ENCODE measurements at regions of chr5 and their contacts with region 1.

Region 1: DNA sequence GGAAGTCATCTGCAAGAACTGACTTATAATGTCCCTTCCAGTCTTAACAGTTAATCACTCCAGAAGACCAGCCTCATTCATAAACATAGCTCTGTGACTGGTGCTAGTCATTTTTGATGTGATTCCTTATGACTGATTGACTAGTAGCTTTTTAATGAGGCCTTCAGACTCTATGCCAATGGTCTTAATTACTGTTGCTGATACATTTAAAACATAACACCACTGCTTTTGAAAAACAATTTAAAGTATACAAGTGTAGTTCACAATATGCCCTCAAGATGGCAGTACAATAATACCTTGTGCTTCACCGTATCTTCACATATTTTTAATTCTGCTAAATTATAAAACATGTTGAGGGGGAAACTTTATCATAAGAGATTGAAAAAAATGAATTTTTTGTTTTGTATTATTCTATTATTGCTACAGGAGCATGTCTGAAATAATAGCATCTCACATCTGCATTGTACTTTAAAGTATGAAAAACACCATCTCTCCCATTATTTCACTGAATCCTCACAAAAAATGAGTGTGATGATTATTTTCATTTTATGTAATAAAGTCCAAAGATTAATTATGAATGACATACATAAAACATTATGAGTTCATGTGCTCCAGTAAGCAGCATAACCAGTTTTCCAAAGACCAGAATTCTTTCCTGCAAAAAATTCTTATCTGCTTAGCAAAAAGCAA is 55.2 kb upstream of the SHISAL2B start:
- DNase-seq: peak in 2 of 9 experiments; percentile 42 to 57
- ATAC-seq: no peak
- H3K4me3 ChIP-seq: no peak overlapping the region
- H3K4me3 Mint-ChIP-seq: no peak overlapping the region
- H3K27ac ChIP-seq: no peak overlapping the region
- H3K27ac Mint-ChIP-seq: no peak overlapping the region
- H3K4me1 ChIP-seq: no peaks in the 10 kb centered on the region
- H3K4me1 Mint-ChIP-seq: no peaks in the 10 kb centered on the region
- H3K27me3 ChIP-seq: no peaks in the 10 kb centered on the region
- H3K27me3 Mint-ChIP-seq: peaks cover 29% of the 10 kb centered on the region
- CTCF ChIP-seq: peak; percentile 97

Region 2: DNA sequence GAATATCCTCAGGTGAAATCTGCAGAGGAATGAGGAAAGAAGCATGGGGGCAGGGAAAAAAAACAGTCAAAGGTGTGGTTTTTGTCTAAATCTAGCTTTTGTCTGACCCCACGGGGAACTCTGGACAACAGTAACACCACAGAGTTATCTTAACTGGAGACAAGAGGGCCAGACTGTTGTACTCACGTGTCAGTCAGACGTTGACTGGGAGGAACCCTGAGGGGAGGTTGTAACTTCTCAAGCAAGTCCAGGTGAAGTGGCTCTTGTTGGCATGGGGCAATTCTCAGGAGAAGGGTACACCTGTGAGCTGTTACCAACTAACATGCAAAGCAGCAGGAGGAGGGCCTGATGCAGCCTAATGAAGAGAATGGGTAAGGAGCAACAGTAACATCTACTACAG is 11.0 kb after region 1 on chr5:
- CTCF ChIA-PET with region 1: interaction called, 34 read pairs
- POLR2A ChIA-PET with region 1: no interaction called
- intact Hi-C with region 1: no loop called
- DNase-seq: no peak
- ATAC-seq: no peak
- H3K4me3 ChIP-seq: no peak overlapping the region
- H3K4me3 Mint-ChIP-seq: no peak overlapping the region
- H3K27ac ChIP-seq: no peak overlapping the region
- H3K27ac Mint-ChIP-seq: no peak overlapping the region
- H3K4me1 ChIP-seq: no peaks in the 10 kb centered on the region
- H3K4me1 Mint-ChIP-seq: no peaks in the 10 kb centered on the region
- H3K27me3 ChIP-seq: no peaks in the 10 kb centered on the region
- H3K27me3 Mint-ChIP-seq: peaks cover 5% of the 10 kb centered on the region
- CTCF ChIP-seq: no peak

Measured in CD8-positive, alpha-beta T cell (primary cell).